Dorsolateral prefrontal cortex (tissue), 120 donors: ENCODE measurements at regions of chr10 and their contacts with region 1.

Region 1: DNA sequence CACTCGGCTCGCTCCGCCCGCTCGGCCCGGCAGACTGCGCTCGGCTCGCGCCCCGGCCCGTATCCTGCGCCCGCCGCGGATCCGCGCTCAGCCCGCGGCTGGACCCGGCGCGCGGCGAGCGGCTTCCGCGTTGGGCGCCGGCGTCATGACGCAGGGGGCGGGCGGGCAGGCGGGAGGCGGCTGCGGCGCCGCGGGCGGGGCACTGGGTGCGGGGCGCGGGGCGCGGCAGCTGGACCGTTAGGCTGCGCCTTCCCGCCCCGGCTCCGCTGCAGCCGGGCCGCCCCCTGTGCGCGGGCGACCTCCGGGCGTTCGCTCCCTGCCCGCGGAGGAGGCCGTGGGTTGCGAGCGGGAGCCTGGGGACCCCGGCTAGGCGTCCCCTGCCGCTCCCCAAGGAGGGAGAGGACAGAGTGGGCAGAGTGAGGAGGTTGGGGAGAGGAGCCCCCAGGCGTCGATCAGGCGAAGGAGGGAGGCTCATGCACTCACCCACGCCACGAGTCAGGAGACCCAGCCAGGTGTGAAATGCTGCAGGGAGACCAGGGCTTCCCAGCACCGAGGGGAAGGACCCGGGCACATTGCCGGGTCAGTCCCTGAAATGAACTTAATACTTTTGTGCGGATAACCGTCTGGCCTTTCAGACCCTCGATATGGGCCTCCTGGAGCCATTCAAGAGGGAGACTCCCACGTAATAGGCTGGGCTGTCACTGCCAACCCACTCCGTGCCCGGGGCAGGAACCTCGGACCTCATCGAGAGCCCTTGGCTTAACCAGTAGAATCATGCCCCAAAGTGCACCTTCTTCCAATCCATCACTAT is at the start of gene PIP4K2A:
- DNase-seq: peak in 9 of 10 donors; percentile 40 to 87 (median 67)
- H3K4me3 ChIP-seq: peak within 1 kb of the TSS; percentile 59 to 99 (median 93)
- H3K27ac ChIP-seq: peak within 1 kb of the TSS; percentile 89 to 100 (median 97)
- H3K27me3 ChIP-seq: no peaks in the 10 kb centered on the region
- CTCF ChIP-seq: peak in 3 of 56 donors; percentile 13 to 28 (median 13)
- total RNA-seq, gene PIP4K2A: 77.5 to 992 (median 272) TPM

Region 2: GRCh38 chr10:22550732-22551131 is 164.0 kb before region 1 on chr10:
- intact Hi-C with region 1: no loop called
- DNase-seq: peak in 5 of 10 donors; percentile 8 to 58 (median 54)
- H3K4me3 ChIP-seq: no peak overlapping the region
- H3K27ac ChIP-seq: peak overlapping the region in 26 of 59 donors; percentile 1 to 93 (median 38)
- H3K27me3 ChIP-seq: no peaks in the 10 kb centered on the region
- CTCF ChIP-seq: peak in 55 of 56 donors; percentile 30 to 71 (median 55)

Region 3: DNA sequence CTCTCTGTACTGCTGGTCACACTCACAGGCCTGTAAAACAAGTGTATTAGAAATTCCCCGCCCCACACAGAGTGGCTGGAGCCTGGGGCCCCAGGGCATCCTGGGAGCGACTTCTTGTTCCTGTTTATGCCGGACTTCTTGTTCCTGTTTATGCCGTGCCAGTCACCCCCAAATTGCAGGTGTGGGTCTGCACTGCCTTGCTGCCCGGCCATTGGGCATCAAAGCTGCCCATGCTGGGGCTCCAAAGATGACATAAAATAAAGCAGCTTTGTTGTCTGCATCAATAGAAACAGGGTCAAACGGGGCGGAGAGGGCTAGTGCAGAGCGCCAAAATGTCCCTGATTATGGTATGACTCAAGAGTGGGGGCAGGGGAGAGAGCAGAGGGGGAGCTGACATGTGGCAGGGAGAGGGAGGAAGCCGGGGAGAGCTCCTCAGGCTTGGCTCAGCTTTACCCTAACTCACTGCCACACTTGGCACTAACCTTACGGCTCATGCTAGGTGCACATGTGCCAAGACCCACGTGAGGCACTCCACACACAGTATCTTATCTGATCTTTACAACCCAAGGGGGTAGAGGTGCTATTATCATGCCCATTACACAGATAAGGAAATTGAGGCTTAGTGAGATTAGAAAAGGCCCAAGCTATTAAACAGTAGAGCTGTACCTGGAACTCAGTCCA is 98.7 kb before region 1 on chr10:
- intact Hi-C with region 1: loop called (anchors 2 to 5 kb)
- DNase-seq: peak; percentile 23 to 98 (median 91)
- H3K4me3 ChIP-seq: peak overlapping the region in 30 of 59 donors; percentile 1 to 44 (median 26)
- H3K27ac ChIP-seq: peak overlapping the region in 58 of 59 donors; percentile 60 to 98 (median 93)
- H3K27me3 ChIP-seq: no peaks in the 10 kb centered on the region
- CTCF ChIP-seq: peak in 5 of 56 donors; percentile 9 to 27 (median 21)

Region 4: GRCh38 chr10:22630234-22631174 is 84.2 kb before region 1 on chr10:
- intact Hi-C with region 1: loop called in 1 of 2 experiments (anchors 5 kb)
- DNase-seq: no peak
- H3K4me3 ChIP-seq: peak overlapping the region in 7 of 59 donors; percentile 3 to 49 (median 16)
- H3K27ac ChIP-seq: peak overlapping the region; percentile 62 to 98 (median 92)
- H3K27me3 ChIP-seq: no peaks in the 10 kb centered on the region
- CTCF ChIP-seq: no peak

Region 5: DNA sequence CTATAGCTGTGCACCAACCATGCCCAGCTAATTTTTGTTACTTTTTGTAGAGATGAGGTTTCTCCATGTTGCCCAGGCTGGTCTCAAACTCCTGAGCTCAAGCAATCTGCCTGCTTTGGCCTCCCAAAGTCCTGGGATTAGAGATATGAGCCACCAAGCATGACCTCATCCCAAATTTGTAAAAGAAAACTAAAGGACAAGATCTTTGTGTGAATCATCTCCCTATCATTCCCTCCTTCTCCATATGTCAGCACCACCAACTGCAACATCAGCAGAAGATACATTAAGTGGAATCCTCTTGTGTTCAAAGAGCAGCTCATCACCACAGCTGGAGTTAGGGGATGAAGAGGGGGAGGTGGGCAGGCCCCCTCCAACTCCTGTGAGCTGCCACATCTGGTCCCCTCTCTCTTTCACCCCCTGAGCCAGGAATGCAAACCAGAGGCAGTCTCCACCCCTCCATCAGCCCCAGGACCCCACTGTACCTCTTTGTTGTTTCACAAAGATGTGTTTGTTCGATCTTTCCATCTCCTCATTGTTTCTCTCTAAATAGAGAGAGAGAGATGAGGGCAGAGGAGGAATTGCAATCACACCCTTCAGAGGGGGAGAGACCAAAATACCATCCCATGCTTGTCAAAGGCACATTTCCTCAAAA is 47.0 kb after region 1 on chr10:
- intact Hi-C with region 1: loop called in 1 of 2 experiments (anchors 1 kb)
- DNase-seq: peak in 9 of 10 donors; percentile 49 to 84 (median 70)
- H3K4me3 ChIP-seq: no peak overlapping the region
- H3K27ac ChIP-seq: peak overlapping the region; percentile 36 to 99 (median 94)
- H3K27me3 ChIP-seq: no peaks in the 10 kb centered on the region
- CTCF ChIP-seq: peak in 10 of 56 donors; percentile 9 to 31 (median 19)

Region 6: GRCh38 chr10:22805283-22805682 is 90.6 kb after region 1 on chr10:
- intact Hi-C with region 1: loop called in 1 of 2 experiments (anchors 5 kb)
- DNase-seq: peak in 9 of 10 donors; percentile 49 to 84 (median 65)
- H3K4me3 ChIP-seq: peak overlapping the region in 7 of 59 donors; percentile 0 to 35 (median 12)
- H3K27ac ChIP-seq: peak overlapping the region in 58 of 59 donors; percentile 19 to 95 (median 88)
- H3K27me3 ChIP-seq: no peaks in the 10 kb centered on the region
- CTCF ChIP-seq: peak in 29 of 56 donors; percentile 9 to 54 (median 29)

Region 7: DNA sequence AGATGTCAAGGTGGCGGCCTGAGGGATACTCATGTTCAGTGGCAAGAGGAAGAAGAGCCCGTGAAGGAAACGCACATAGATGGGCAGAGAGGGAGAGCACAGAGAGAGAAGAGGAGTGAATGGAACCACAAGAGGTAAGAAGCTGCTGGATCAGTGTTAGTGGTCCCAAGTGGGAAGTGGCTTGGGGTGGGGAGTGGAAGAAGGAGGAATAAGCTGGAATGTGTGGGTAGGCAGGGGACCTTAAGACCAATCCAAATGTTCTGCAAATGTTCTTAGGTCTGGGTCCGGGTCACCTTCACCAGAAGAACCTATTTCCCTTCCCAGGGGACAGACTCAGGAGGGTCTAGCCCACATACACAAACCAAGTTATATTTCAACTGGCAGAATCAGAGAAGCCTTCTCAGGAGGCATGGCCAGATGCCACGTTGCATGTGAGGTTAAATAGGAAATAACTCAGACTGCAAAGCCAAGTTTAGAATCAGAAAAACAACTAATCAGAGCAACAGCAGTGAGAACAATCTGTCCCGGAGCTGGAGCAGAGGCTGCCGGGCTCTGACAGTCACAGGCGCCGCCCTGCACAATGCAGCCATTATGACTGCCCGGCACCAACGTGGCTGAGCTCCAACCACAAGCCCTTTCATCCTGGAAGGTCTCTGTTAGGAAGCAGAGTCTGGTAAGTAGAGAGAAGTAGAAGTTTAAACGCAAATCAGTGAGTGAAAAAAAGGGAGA is 134.6 kb after region 1 on chr10:
- intact Hi-C with region 1: loop called in 1 of 2 experiments (anchors 2 kb)
- DNase-seq: peak; percentile 39 to 98 (median 94)
- H3K4me3 ChIP-seq: peak overlapping the region in 40 of 59 donors; percentile 0 to 55 (median 21)
- H3K27ac ChIP-seq: peak overlapping the region; percentile 85 to 100 (median 98)
- H3K27me3 ChIP-seq: peaks cover 0 to 2% (median 0%) of the 10 kb centered on the region in 45 donors
- CTCF ChIP-seq: peak in 15 of 56 donors; percentile 13 to 44 (median 24)